Activated B cell treated with CpG ODN at 0.5 μM for 24 hours (primary cell): ENCODE measurements at regions of chr6 and their contacts with region 1.

Region 1: GRCh38 chr6:24581084-24581669 is 64.8 kb downstream of the KIAA0319 start:
- DNase-seq: peak; percentile 58
- ATAC-seq: peak; percentile 89
- H3K4me3 Mint-ChIP-seq: no peak overlapping the region
- H3K27ac Mint-ChIP-seq: no peak overlapping the region
- H3K4me1 Mint-ChIP-seq: peaks cover 2% of the 10 kb centered on the region
- H3K27me3 Mint-ChIP-seq: no peaks in the 10 kb centered on the region
- CTCF ChIP-seq: peak; percentile 73

Region 2: GRCh38 chr6:24431045-24431451 is 150.1 kb before region 1 on chr6:
- CTCF ChIA-PET with region 1: no interaction called
- POLR2A ChIA-PET with region 1: no interaction called
- intact Hi-C with region 1: loop called (anchors 1 kb)
- DNase-seq: no peak
- ATAC-seq: peak; percentile 42
- H3K4me3 Mint-ChIP-seq: no peak overlapping the region
- H3K27ac Mint-ChIP-seq: no peak overlapping the region
- H3K4me1 Mint-ChIP-seq: no peaks in the 10 kb centered on the region
- H3K27me3 Mint-ChIP-seq: no peaks in the 10 kb centered on the region
- CTCF ChIP-seq: peak; percentile 52

Region 3: DNA sequence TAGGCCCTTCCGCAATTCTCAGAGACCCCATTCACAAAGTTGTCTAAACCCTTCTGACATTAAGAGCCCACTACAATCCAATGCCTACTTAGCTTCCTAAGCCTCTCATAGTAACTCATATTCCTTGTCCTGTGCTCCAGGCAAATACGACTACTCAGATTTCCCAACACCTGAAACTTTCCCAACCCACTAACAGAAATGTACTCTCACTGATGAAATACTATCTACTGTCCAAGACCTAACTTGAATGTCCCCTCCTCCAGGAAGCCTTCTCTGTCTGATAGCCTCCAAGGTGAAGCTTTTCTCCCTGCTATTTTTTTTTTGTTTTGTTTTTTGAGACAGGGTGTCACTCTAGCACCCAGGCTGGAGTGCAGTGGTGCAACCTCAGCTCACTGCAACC is 122.2 kb before region 1 on chr6:
- CTCF ChIA-PET with region 1: no interaction called
- POLR2A ChIA-PET with region 1: no interaction called
- intact Hi-C with region 1: no loop called
- DNase-seq: no peak
- ATAC-seq: no peak
- H3K4me3 Mint-ChIP-seq: no peak overlapping the region
- H3K27ac Mint-ChIP-seq: no peak overlapping the region
- H3K4me1 Mint-ChIP-seq: no peaks in the 10 kb centered on the region
- H3K27me3 Mint-ChIP-seq: no peaks in the 10 kb centered on the region
- CTCF ChIP-seq: no peak

Region 4: GRCh38 chr6:24520929-24521546 is 60.1 kb before region 1 on chr6:
- CTCF ChIA-PET with region 1: interaction called, 24 read pairs
- POLR2A ChIA-PET with region 1: no interaction called
- intact Hi-C with region 1: loop called (anchors 2 kb)
- DNase-seq: peak; percentile 35
- ATAC-seq: peak; percentile 40
- H3K4me3 Mint-ChIP-seq: peak overlapping the region; percentile 42
- H3K27ac Mint-ChIP-seq: peak overlapping the region; percentile 88
- H3K4me1 Mint-ChIP-seq: peaks cover 62% of the 10 kb centered on the region
- H3K27me3 Mint-ChIP-seq: no peaks in the 10 kb centered on the region
- CTCF ChIP-seq: no peak

Region 5: GRCh38 chr6:24646782-24647181 is 65.6 kb after region 1 on chr6:
- CTCF ChIA-PET with region 1: interaction called, 6 read pairs
- POLR2A ChIA-PET with region 1: no interaction called
- intact Hi-C with region 1: loop called (anchors 2 kb)
- DNase-seq: no peak
- ATAC-seq: no peak
- H3K4me3 Mint-ChIP-seq: peak overlapping the region; percentile 89
- H3K27ac Mint-ChIP-seq: peak overlapping the region; percentile 91
- H3K4me1 Mint-ChIP-seq: peaks cover 28% of the 10 kb centered on the region
- H3K27me3 Mint-ChIP-seq: no peaks in the 10 kb centered on the region
- CTCF ChIP-seq: no peak

Region 6: GRCh38 chr6:24689964-24690363 is 108.8 kb after region 1 on chr6:
- CTCF ChIA-PET with region 1: interaction called, 82 read pairs
- POLR2A ChIA-PET with region 1: no interaction called
- intact Hi-C with region 1: loop called (anchors 1 kb)
- DNase-seq: no peak
- ATAC-seq: no peak
- H3K4me3 Mint-ChIP-seq: no peak overlapping the region
- H3K27ac Mint-ChIP-seq: no peak overlapping the region
- H3K4me1 Mint-ChIP-seq: no peaks in the 10 kb centered on the region
- H3K27me3 Mint-ChIP-seq: no peaks in the 10 kb centered on the region
- CTCF ChIP-seq: no peak

Region 7: GRCh38 chr6:24766680-24767462 is 185.7 kb after region 1 on chr6:
- CTCF ChIA-PET with region 1: interaction called, 61 read pairs
- POLR2A ChIA-PET with region 1: no interaction called
- intact Hi-C with region 1: loop called (anchors 1 kb)
- DNase-seq: no peak
- ATAC-seq: peak; percentile 78
- H3K4me3 Mint-ChIP-seq: no peak overlapping the region
- H3K27ac Mint-ChIP-seq: no peak overlapping the region
- H3K4me1 Mint-ChIP-seq: no peaks in the 10 kb centered on the region
- H3K27me3 Mint-ChIP-seq: no peaks in the 10 kb centered on the region
- CTCF ChIP-seq: no peak

Region 8: DNA sequence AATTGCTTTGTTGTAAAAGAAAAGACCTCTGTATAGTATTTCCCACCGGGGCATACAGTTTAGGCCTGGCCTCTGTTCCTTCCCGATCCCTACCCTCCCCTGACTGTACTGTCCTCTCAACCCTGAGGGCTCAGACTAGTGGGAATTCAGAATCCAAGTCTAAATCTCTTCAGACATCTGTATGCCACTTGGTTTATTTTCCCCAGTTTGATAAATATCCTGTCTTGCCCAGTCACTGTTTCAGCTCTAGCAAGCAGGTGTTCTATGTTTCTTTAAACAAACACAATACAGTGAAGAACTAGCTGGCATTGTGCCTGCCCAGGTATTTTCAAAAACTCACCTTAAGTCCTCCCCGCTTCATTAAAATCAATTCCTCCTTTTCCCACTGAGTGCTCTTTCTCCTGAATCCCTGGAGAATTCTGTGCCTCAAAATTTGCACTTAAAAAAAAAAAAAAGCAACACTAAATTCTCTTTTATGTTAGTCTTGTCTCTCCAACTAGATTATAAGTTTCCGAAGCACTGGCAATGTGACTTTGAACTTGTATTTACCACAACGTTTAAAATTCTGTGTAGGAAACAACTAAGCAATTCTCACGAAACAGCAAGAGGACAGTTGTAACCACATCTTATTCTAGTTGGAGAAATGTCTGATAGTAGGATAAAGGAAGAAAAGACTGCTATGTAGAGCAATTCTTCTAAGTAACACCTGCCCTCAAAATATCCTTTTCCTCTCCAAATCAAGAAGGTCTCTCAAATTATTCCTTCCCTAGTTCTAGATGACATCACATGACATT is 586.0 kb after region 1 on chr6:
- CTCF ChIA-PET with region 1: no interaction called
- POLR2A ChIA-PET with region 1: no interaction called
- intact Hi-C with region 1: no loop called
- DNase-seq: no peak
- ATAC-seq: no peak
- H3K4me3 Mint-ChIP-seq: no peak overlapping the region
- H3K27ac Mint-ChIP-seq: no peak overlapping the region
- H3K4me1 Mint-ChIP-seq: no peaks in the 10 kb centered on the region
- H3K27me3 Mint-ChIP-seq: no peaks in the 10 kb centered on the region
- CTCF ChIP-seq: no peak